GM12878 (cell line): ENCODE measurements at regions of chr6 and their contacts with region 1.

Region 1: GRCh38 chr6:109382576-109383437 is 540 bp upstream of the CD164 start:
- DNase-seq: peak; percentile 82
- ATAC-seq: peak; percentile 79
- H3K4me3 ChIP-seq: peak overlapping the region; percentile 86
- H3K27ac ChIP-seq: peak overlapping the region; percentile 100
- H3K4me1 ChIP-seq: peaks cover 8% of the 10 kb centered on the region
- H3K27me3 ChIP-seq: no peaks in the 10 kb centered on the region
- CTCF ChIP-seq: peak; percentile 51 to 71 (median 60); a peak in 5 of 6 replicates
- EP300 ChIP-seq: peak in 1 of 2 experiments; percentile 69; a peak in 1 of 4 replicates
- POLR2A ChIP-seq: peak; percentile 75
- RAD21 ChIP-seq: peak; percentile 74

Region 2: DNA sequence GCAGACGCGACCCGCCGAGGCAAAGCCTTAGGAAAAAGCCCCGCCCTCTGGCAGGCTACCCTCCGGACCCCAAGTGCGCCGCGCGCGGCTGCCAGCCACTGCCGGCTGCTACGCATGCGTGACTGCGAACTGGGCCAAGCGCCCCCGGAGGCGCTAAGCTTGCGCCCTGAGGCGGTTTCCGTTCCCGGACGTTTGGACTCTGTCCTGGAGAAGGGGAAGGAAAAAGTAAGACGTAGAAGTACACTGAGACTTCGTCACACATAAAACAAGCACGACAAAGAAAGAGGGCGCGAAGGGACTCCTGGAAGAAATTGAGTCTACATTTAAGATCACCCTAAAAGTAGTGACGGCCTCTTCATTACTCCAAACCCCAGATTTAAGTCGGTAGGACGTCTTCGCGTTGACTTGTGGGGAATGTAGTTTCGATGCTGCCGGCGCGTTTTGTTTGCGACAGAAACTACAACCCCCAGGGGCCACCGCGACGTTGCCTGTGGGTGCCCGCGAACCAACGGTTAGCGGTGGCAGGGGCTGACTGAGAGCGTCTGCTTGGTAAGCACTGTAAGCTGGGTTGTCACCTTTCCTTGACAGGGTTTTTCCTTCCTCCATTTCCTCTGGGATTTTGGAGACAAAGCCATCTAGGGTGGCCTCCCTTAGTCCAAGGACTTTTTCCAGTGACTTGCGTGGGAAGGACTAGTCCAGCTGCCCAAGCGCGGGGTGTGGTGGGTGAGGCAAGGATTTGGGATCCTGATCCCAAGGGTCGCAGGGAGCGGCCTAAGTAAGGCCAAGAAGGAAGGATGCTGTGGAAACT is 287.6 kb before region 1 on chr6 and contains the start of gene CEP57L1:
- CTCF ChIA-PET with region 1: interaction called, 20 read pairs
- POLR2A ChIA-PET with region 1: interaction called, 8 read pairs
- RAD21 ChIA-PET with region 1: interaction called, 11 read pairs
- SMC1A ChIA-PET with region 1: no interaction called
- in situ Hi-C with region 1: loop called (anchors 5 kb)
- intact Hi-C with region 1: loop called (anchors 2 kb)
- DNase-seq: peak; percentile 88
- ATAC-seq: peak; percentile 81
- H3K4me3 ChIP-seq: peak within 1 kb of the TSS; percentile 90
- H3K27ac ChIP-seq: peak within 1 kb of the TSS; percentile 94
- H3K4me1 ChIP-seq: no peaks in the 10 kb centered on the region
- H3K27me3 ChIP-seq: no peaks in the 10 kb centered on the region
- CTCF ChIP-seq: peak; percentile 14 to 23 (median 14); a peak in 2 of 6 replicates
- EP300 ChIP-seq: no peak
- POLR2A ChIP-seq: peak; percentile 84
- RAD21 ChIP-seq: no peak
- polyA plus RNA-seq, gene CEP57L1: 22.6 to 24.0 TPM

Region 3: GRCh38 chr6:109194880-109195279 is 187.9 kb before region 1 on chr6:
- CTCF ChIA-PET with region 1: interaction called, 8 read pairs
- POLR2A ChIA-PET with region 1: interaction called, 3 read pairs
- RAD21 ChIA-PET with region 1: interaction called, 4 read pairs
- SMC1A ChIA-PET with region 1: interaction called, 18 read pairs
- in situ Hi-C with region 1: no loop called
- intact Hi-C with region 1: no loop called
- DNase-seq: no peak
- ATAC-seq: no peak
- H3K4me3 ChIP-seq: no peak overlapping the region
- H3K27ac ChIP-seq: no peak overlapping the region
- H3K4me1 ChIP-seq: no peaks in the 10 kb centered on the region
- H3K27me3 ChIP-seq: no peaks in the 10 kb centered on the region
- CTCF ChIP-seq: no peak
- EP300 ChIP-seq: no peak
- POLR2A ChIP-seq: no peak
- RAD21 ChIP-seq: no peak

Region 4: DNA sequence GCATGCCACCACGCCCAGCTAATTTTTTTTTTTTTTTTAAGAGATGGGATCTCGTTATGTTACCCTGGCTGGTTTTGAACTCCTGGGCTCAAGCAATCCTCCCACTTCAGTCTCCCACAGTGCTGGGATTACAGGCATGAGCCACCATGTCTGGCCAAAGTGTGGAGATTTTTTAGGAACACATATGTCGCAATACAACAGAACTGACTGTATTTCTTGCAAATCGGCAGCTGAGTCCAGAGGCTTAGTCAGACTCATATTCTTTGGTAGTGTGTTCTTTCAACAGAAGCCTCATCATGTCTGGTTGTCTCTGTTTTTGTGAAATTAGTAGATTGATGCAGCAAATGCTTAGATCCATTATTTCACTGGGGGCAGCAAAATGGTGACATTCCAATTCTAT is 23.4 kb after region 1 on chr6:
- CTCF ChIA-PET with region 1: no interaction called
- POLR2A ChIA-PET with region 1: no interaction called
- RAD21 ChIA-PET with region 1: no interaction called
- SMC1A ChIA-PET with region 1: no interaction called
- in situ Hi-C with region 1: no loop called
- intact Hi-C with region 1: no loop called
- DNase-seq: no peak
- ATAC-seq: no peak
- H3K4me3 ChIP-seq: no peak overlapping the region
- H3K27ac ChIP-seq: no peak overlapping the region
- H3K4me1 ChIP-seq: no peaks in the 10 kb centered on the region
- H3K27me3 ChIP-seq: no peaks in the 10 kb centered on the region; a peak in 1 of 4 replicates
- CTCF ChIP-seq: no peak
- EP300 ChIP-seq: no peak
- POLR2A ChIP-seq: no peak
- RAD21 ChIP-seq: no peak

Region 5: GRCh38 chr6:109455502-109456282 is 72.9 kb after region 1 on chr6 and contains the start of gene MICAL1:
- CTCF ChIA-PET with region 1: interaction called, 12 read pairs
- POLR2A ChIA-PET with region 1: interaction called, 7 read pairs
- RAD21 ChIA-PET with region 1: interaction called, 15 read pairs
- SMC1A ChIA-PET with region 1: interaction called, 8 read pairs
- in situ Hi-C with region 1: no loop called
- intact Hi-C with region 1: loop called (anchors 5 kb)
- DNase-seq: peak; percentile 45
- ATAC-seq: peak; percentile 78
- H3K4me3 ChIP-seq: peak within 1 kb of the TSS; percentile 89
- H3K27ac ChIP-seq: peak within 1 kb of the TSS; percentile 98
- H3K4me1 ChIP-seq: peaks cover 54% of the 10 kb centered on the region
- H3K27me3 ChIP-seq: no peaks in the 10 kb centered on the region
- CTCF ChIP-seq: peak in 2 of 3 experiments; percentile 19 to 45; a peak in 4 of 6 replicates
- EP300 ChIP-seq: 0 out of 4 replicates have a peak, but pooled peaks of 1 of the 2 experiments have one; percentile 20
- POLR2A ChIP-seq: peak; percentile 82
- RAD21 ChIP-seq: no peak
- polyA plus RNA-seq, gene MICAL1: 0.32 to 1.3 TPM